ENCODE measurements at regions of chr17 and their contacts with region 1.

Region 1: DNA sequence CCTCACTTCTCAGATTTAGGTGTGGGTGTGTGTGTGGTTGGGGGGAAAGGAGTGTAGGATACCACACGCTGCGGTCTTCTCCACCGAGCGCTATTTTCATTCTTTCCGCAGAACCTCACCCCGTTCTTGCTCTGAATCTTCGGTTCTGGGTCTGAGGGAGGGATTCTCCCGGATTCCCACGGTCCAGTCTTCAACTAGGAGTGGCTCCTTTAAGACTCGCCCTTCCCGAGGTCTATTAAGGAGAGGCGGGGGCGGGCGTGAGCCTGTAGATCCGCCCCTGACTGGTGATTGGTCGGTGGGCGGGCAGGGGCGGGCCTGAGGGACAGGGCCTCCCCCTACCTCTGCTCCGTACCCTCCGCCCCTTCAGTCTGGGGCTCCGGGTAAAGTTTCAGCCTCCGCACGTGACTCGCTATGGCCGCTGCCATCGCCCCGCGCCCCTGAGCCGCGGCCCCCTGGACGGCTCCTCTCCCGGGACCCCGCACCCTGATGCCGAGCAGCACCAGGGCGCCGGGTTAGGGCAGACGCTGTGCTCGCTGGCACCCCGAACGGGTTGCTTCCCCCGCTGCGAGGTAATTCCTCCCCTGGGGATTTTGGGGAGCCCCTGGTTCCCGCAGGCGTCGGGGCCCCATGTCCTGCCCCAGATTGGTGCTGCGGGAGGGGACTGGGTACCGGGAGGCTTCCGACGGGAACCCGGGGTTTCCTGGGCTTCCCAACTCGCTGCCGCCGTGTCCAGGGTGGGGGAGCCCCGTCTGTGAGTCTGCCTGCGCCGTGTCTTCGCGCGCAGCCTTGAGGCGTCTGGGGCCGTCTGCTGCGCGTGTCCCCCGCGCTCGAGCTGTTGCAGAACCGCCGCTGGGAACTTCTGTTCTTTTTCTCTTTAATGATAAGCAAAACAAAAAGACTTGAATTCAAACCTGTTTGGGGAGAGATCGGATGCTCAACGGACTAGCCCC is 9.2 kb downstream of the RARA start:
- DNase-seq: peak; percentile 98
- CTCF ChIP-seq: no peak

Region 2: GRCh38 chr17:40340880-40341807 is 23.0 kb after region 1 on chr17:
- CTCF ChIA-PET with region 1: interaction called, 5 read pairs
- POLR2A ChIA-PET with region 1: interaction called, 11 read pairs
- DNase-seq: peak; percentile 83
- CTCF ChIP-seq: no peak

Region 3: DNA sequence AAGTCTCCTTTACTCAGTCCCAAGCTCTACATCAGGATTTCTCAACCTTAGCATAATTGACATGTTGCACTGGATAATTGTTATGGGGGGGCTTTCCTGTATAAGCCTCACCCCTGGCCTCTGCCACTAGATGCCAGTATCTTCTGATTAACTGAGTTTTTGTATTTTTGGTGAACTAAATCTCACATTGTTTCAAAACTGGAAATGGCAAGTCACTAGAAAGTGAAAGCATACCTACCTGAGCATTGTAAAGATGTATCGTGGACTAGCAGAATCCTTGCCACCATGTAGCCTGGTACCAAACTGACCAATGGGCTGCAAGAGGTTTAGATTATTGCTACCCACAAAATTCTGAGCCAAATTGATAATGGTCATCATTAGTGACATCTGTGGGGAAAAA is 84.5 kb after region 1 on chr17:
- CTCF ChIA-PET with region 1: no interaction called
- POLR2A ChIA-PET with region 1: no interaction called
- DNase-seq: no peak
- CTCF ChIP-seq: no peak

Region 4: DNA sequence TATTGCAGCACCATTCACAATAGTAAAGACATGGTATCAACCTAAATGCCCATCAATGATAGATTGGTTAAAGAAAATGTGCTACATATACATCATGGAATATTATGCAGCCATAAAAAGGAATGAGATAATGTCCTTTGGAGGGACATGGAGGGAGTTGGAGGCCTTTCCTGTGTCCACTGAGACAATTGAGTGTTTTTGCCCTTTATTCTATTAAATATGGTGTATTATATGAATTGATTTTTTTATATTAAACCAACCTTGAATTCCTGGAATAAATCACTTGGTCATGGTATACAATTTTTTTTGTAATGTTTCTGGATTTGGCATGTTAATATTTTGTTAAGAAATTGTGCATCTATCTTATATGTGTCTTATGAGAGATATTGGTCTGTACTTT is 256.1 kb after region 1 on chr17:
- CTCF ChIA-PET with region 1: no interaction called
- POLR2A ChIA-PET with region 1: no interaction called
- DNase-seq: no peak
- CTCF ChIP-seq: no peak

Measured in GM10248 (cell line).